ENCODE measurements at regions of chr2 and their contacts with region 1.

Region 1: DNA sequence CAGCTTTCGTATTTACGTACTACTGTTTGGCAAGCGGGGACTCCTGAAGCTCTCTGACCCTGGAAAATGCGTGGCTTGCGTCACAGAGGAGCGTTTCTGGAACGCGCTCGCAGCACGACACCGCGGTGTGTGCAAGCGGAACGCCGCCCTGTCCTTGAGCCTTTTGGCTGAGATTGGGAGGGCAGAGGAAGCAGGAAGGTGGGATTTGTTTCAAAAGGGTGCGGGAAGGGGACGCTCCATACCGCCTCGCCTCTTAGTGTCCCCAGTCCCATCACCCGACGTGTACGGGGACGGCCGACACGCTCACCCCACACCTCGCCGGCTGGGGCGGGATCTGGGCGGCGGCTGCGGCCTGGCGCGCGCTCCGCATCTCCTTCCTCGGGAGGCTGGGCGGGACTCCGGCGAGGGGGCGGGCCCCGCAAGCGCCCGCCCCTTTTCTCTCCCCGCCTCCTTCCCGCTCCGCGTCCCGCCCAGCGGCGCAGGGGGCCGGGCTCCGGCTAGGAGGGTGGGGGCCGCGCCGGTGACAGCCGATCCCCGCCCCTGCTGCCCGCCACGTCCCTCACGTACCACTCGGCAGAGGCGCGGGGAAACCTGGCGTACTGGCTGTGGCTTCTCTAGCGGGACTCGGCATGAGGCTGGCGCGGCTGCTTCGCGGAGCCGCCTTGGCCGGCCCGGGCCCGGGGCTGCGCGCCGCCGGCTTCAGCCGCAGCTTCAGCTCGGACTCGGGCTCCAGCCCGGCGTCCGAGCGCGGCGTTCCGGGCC is at the start of gene PDK1:
- DNase-seq: peak; percentile 93
- H3K4me3 Mint-ChIP-seq: peak within 1 kb of the TSS; percentile 90
- H3K27ac Mint-ChIP-seq: peak within 1 kb of the TSS; percentile 90
- H3K4me1 Mint-ChIP-seq: peaks cover 45% of the 10 kb centered on the region
- H3K27me3 Mint-ChIP-seq: peaks cover 6% of the 10 kb centered on the region
- total RNA-seq, gene PDK1: 24.7 to 31.6 TPM

Region 2: GRCh38 chr2:172427256-172427989 is 128.3 kb before region 1 on chr2 and contains the start of gene ITGA6:
- CTCF ChIA-PET with region 1: no interaction called
- POLR2A ChIA-PET with region 1: no interaction called
- intact Hi-C with region 1: loop called (anchors 10 kb)
- DNase-seq: peak; percentile 86
- H3K4me3 Mint-ChIP-seq: peak within 1 kb of the TSS; percentile 80
- H3K27ac Mint-ChIP-seq: peak within 1 kb of the TSS; percentile 56
- H3K4me1 Mint-ChIP-seq: peaks cover 77% of the 10 kb centered on the region
- H3K27me3 Mint-ChIP-seq: no peaks in the 10 kb centered on the region
- total RNA-seq, gene ITGA6: 8.2 to 8.6 TPM

Region 3: DNA sequence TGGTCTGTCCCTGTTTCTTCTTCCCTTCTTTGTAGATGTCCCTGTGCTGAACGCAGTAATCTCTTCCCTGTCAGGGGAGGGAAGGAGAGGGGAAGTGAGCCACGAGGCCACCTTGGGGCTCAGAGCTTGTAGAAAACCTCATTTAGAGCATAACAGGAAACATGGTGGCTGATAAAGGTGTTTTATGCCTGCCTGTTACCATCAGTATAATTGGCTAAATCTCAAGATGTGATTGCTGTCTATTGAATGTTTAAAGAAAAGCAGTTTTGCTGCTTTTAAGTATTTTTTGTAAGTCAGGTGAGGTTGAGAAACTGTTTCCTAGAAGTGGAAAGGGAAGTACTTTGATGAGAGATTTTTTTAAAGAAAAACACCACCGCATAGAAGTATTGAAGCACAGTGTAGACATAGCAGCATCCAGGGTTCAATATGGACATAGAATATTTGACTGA is 59.5 kb before region 1 on chr2:
- CTCF ChIA-PET with region 1: no interaction called
- POLR2A ChIA-PET with region 1: interaction called, 4 read pairs
- intact Hi-C with region 1: loop called (anchors 2 kb)
- DNase-seq: peak; percentile 34
- H3K4me3 Mint-ChIP-seq: peak overlapping the region; percentile 23
- H3K27ac Mint-ChIP-seq: peak overlapping the region; percentile 85
- H3K4me1 Mint-ChIP-seq: peaks cover 57% of the 10 kb centered on the region
- H3K27me3 Mint-ChIP-seq: no peaks in the 10 kb centered on the region

Measured in activated CD4-positive, alpha-beta memory T cell treated with anti-CD3 and anti-CD28 coated beads for 36 hours (primary cell).